PC-9 (cell line): ENCODE measurements at regions of chr12 and their contacts with region 1.

Region 1: DNA sequence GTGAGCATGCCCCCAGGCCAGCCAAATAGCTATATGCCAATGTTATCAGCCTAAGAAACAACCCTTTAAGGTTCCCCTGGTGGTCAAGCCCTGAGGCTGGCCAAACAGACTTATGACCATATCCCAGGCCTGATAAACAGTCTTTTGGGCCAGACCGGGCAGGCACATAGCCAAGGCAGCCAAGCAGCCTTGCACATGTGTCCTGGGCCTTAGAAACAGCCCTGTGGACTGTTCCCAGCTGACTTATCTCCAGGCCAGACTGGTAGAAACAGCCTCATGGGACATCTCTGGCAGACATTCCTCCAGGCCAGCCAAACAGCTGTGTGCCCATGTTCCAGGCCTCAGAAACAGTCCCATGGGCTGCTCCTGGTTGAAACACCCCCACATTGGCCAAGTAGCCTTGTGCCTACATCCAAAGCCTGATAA is 295.0 kb upstream of the MGAT4C start:
- DNase-seq: no peak
- H3K4me3 ChIP-seq: no peak overlapping the region
- H3K27ac ChIP-seq: no peak overlapping the region
- H3K4me1 ChIP-seq: no peaks in the 10 kb centered on the region
- H3K27me3 ChIP-seq: no peaks in the 10 kb centered on the region
- CTCF ChIP-seq: no peak

Region 2: DNA sequence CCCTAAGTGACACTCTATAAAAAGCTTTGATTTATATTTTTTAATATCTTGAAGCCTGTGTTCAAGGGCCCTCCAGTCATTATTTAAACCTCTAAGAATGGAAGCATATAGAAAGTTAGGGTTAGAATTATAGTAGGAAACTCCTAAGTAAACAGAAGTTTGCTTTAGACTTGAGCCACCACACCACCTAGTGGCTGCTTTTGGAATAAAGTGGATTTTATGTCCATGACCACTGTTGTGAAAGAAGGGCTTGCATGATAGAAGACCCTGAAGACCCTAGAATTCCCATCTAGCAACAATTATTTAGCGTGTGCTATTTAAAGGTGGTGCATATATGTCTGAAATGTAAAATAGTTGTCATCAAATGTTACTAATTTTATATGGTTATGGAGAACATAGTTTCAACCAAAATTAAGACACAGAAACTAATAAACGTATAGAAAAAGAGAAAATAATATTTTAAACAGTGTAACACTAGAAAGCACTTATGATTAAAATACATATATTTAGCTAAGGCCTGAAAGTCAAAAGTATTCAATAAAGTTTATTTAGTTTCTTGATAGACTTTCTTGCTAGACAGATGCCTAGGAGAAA is 1493.7 kb before region 1 on chr12:
- CTCF ChIA-PET with region 1: no interaction called
- POLR2A ChIA-PET with region 1: interaction called, 11 read pairs
- intact Hi-C with region 1: no loop called
- DNase-seq: peak in 1 of 2 experiments; percentile 10
- H3K4me3 ChIP-seq: no peak overlapping the region
- H3K27ac ChIP-seq: no peak overlapping the region
- H3K4me1 ChIP-seq: no peaks in the 10 kb centered on the region
- H3K27me3 ChIP-seq: no peaks in the 10 kb centered on the region
- CTCF ChIP-seq: peak; percentile 92

Region 3: GRCh38 chr12:86597431-86597830 is 46.3 kb after region 1 on chr12:
- CTCF ChIA-PET with region 1: no interaction called
- POLR2A ChIA-PET with region 1: interaction called, 14 read pairs
- intact Hi-C with region 1: no loop called
- DNase-seq: no peak
- H3K4me3 ChIP-seq: no peak overlapping the region
- H3K27ac ChIP-seq: no peak overlapping the region
- H3K4me1 ChIP-seq: no peaks in the 10 kb centered on the region
- H3K27me3 ChIP-seq: no peaks in the 10 kb centered on the region
- CTCF ChIP-seq: no peak